Right cardiac atrium (tissue), 5 donors: ENCODE measurements at regions of chr6 and their contacts with region 1.

Region 1: GRCh38 chr6:110389689-110390382 is 25.5 kb downstream of the DDO start:
- DNase-seq: no peak
- ATAC-seq: peak; percentile 15 to 42
- H3K4me3 ChIP-seq: no peak overlapping the region
- H3K27ac ChIP-seq: no peak overlapping the region
- H3K4me1 ChIP-seq: peaks cover 2% of the 10 kb centered on the region
- H3K27me3 ChIP-seq: no peaks in the 10 kb centered on the region

Region 2: DNA sequence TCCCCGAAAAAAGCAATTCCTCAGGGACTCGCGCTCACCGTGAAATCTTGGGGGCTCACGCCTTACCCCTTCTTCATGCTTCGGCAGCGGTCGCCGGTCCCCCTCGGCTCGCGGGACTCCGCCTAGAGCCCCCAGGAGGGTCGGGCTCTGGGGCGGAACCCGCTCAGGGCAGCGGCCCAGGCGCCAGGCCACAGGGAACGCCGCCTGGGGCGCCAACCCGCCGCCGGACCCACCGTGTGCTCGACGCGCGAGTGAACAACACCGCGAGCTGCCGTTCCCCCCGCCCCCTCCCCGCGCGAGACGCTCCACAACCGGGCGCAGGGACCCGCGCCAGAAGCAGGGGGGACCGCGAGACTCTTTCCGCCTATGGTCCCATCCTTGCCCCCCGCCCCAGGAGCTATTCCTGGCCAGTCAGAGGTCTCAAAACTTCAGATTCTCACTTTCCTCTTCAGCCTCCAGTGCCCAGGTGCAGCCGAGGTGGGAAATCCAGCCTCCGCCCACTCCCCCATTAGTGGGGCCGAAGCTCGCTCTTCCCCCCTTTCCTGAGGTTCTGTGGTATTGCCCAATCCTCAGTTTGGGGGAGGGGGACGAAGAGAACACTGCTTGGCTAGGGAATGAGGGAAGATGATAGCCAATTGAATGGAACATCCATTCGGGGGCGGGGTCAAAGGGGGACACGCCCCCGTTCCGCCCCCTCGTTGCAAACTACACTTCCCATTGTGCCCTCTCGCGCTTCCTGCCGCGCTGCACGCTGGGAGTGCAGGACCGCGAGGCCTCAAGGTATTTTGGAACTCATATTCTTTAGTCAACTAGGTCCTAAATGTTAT is 210.2 kb before region 1 on chr6 and contains the start of gene WASF1:
- intact Hi-C with region 1: loop called in 3 of 4 experiments (anchors 5 to 10 kb)
- DNase-seq: peak; percentile 94 to 98 (median 97)
- ATAC-seq: peak; percentile 99
- H3K4me3 ChIP-seq: peak within 1 kb of the TSS; percentile 86
- H3K27ac ChIP-seq: peak within 1 kb of the TSS; percentile 93
- H3K4me1 ChIP-seq: peaks cover 6% of the 10 kb centered on the region
- H3K27me3 ChIP-seq: no peaks in the 10 kb centered on the region
- total RNA-seq, gene WASF1: 1.5 to 3.6 (median 2.3) TPM

Region 3: GRCh38 chr6:110325197-110325596 is 64.6 kb before region 1 on chr6:
- intact Hi-C with region 1: no loop called
- DNase-seq: no peak
- ATAC-seq: peak; percentile 41 to 48
- H3K4me3 ChIP-seq: no peak overlapping the region
- H3K27ac ChIP-seq: peak overlapping the region; percentile 3
- H3K4me1 ChIP-seq: peaks cover 6% of the 10 kb centered on the region
- H3K27me3 ChIP-seq: no peaks in the 10 kb centered on the region

Region 4: GRCh38 chr6:110646951-110647910 is 257.4 kb after region 1 on chr6:
- intact Hi-C with region 1: no loop called
- DNase-seq: no peak
- ATAC-seq: no peak
- H3K4me3 ChIP-seq: no peak overlapping the region
- H3K27ac ChIP-seq: no peak overlapping the region
- H3K4me1 ChIP-seq: no peaks in the 10 kb centered on the region
- H3K27me3 ChIP-seq: no peaks in the 10 kb centered on the region